ENCODE measurements at regions of chr11 and their contacts with region 1.

Region 1: GRCh38 chr11:77091146-77091940 is 11.3 kb upstream of the OMP start:
- DNase-seq: peak; percentile 61 to 85 (median 64)
- H3K4me3 ChIP-seq: no peak overlapping the region
- H3K4me3 Mint-ChIP-seq: no peak overlapping the region
- H3K27ac ChIP-seq: no peak overlapping the region
- H3K27ac Mint-ChIP-seq: no peak overlapping the region
- H3K4me1 ChIP-seq: no peaks in the 10 kb centered on the region
- H3K4me1 Mint-ChIP-seq: peaks cover 0 to 4% (median 4%) of the 10 kb centered on the region in 3 donors
- H3K27me3 ChIP-seq: no peaks in the 10 kb centered on the region
- H3K27me3 Mint-ChIP-seq: no peaks in the 10 kb centered on the region

Region 2: DNA sequence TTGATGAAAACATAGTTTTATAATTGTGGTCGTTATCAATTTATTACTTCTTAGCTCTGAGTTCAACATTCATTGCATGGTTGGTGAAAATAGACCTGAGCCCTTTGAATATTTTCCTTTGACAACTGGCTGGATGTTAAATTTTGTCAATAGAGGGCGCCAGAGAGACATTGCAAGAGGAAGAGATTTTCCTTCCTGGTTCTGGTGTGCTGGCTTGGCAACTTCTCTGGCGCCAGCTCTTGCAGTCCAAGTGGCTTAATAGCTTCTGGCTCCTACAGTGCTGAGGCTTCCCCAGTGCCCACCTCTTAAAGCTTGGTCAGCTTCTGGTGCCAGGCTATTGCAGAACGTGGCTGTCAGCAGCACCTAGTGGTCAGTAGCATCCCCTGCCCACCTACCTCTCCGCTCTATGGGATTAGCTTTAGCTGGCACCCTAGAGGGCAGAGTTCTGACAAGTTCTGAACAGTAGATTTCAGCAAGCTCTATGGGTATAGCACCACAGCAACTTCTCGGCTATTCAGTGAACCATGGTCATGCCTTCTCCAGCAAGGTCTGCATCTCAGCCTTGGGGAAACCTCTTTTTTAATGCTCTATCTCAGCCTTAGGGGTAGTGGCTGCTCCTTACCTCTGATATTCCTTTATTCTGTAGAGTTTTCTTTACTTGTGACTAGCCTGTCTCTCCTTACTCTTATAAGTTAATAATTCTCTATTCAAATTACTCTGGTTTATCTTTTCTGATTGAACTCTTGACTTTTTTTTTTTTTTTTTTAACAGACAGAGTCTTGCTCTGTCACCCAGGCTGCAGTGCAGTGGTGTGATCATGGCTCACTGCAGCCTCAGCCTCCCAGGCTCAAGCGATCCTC is 171.2 kb before region 1 on chr11:
- CTCF ChIA-PET with region 1: interaction called, 18 read pairs
- POLR2A ChIA-PET with region 1: no interaction called
- DNase-seq: peak; percentile 29 to 65 (median 62)
- H3K4me3 ChIP-seq: peak overlapping the region; percentile 15
- H3K4me3 Mint-ChIP-seq: peak overlapping the region in 6 of 7 donors; percentile 67 to 79 (median 72)
- H3K27ac ChIP-seq: no peak overlapping the region
- H3K27ac Mint-ChIP-seq: peak overlapping the region in 2 of 8 donors; percentile 35 to 75
- H3K4me1 ChIP-seq: peaks cover 5% of the 10 kb centered on the region
- H3K4me1 Mint-ChIP-seq: peaks cover 6 to 15% (median 13%) of the 10 kb centered on the region in 3 donors
- H3K27me3 ChIP-seq: no peaks in the 10 kb centered on the region
- H3K27me3 Mint-ChIP-seq: no peaks in the 10 kb centered on the region

Region 3: DNA sequence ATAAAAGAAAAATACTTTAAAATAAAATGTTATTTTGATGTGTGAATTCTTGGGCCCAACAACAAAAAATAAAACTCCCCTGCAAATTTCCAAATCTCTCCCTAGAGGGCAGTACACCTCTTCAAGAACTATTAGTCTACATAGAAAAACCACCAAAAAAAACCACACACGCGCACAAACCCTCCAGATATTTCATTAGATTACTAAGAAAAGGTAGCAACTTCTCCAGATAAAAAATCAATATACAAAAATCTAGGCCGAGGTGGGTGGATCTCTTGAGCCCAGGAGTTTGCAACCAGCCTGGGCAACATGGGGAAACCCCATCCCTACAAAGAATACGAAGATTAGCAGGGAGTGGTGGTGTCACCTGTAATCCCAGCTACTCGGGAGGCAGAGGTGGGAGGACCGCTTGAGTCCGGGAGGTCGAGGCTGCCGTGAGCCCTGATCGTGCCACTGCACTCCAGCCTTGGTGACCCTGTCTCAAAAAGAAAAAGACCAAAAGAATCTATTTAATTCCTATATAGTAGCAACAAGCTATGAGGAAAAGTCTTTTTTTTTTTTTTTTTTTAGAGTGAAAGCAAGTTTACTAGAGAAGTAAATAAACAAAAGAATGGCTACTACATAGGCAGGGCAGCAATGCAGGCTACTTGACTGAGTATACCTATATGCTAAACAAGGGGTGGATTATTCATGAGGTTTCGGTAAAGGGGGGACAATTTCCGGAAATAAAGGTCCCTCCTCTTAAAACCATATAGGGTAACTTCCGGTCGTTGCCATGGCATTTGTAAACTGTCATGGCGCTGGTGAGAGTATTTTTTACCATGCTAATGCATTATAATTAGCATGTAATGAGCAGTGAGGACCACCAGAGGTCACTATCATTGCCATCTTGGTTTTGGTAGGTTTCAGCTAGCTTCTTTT is 44.1 kb before region 1 on chr11:
- CTCF ChIA-PET with region 1: interaction called, 75 read pairs
- POLR2A ChIA-PET with region 1: interaction called, 5 read pairs
- DNase-seq: peak; percentile 59 to 92 (median 89)
- H3K4me3 ChIP-seq: peak overlapping the region; percentile 58
- H3K4me3 Mint-ChIP-seq: peak overlapping the region; percentile 57 to 73 (median 69)
- H3K27ac ChIP-seq: peak overlapping the region; percentile 25
- H3K27ac Mint-ChIP-seq: peak overlapping the region; percentile 9 to 89 (median 70)
- H3K4me1 ChIP-seq: peaks cover 15% of the 10 kb centered on the region
- H3K4me1 Mint-ChIP-seq: peaks cover 8 to 12% (median 10%) of the 10 kb centered on the region in 3 donors
- H3K27me3 ChIP-seq: peaks cover 5% of the 10 kb centered on the region
- H3K27me3 Mint-ChIP-seq: peaks cover 23 to 24% of the 10 kb centered on the region in 2 donors

Region 4: DNA sequence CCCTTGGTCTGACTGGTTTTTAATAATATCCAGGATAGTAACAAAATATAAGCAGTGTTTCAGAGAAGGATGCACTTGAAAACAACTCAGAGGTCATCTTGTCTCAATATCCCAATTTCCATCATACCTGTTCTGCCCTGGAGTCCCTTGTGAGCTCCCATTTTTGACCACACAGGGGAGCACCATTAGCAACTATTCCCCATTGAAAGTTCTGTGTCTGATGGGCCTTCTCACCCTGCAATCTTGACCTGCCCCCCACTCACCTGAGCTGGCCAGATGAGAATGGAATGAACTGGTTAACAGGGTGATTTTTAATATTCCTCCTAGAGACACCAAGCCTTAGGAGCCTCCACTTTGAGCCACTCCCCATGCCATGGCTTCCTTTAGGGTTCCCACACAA is 28.4 kb before region 1 on chr11:
- CTCF ChIA-PET with region 1: interaction called, 19 read pairs
- POLR2A ChIA-PET with region 1: no interaction called
- DNase-seq: no peak
- H3K4me3 ChIP-seq: no peak overlapping the region
- H3K4me3 Mint-ChIP-seq: peak overlapping the region in 1 of 7 donors; percentile 55
- H3K27ac ChIP-seq: no peak overlapping the region
- H3K27ac Mint-ChIP-seq: peak overlapping the region in 2 of 8 donors; percentile 18 to 37
- H3K4me1 ChIP-seq: peaks cover 8% of the 10 kb centered on the region
- H3K4me1 Mint-ChIP-seq: peaks cover 4 to 15% (median 10%) of the 10 kb centered on the region in 3 donors
- H3K27me3 ChIP-seq: no peaks in the 10 kb centered on the region
- H3K27me3 Mint-ChIP-seq: peaks cover 0 to 11% of the 10 kb centered on the region in 2 donors

Region 5: GRCh38 chr11:77127232-77127911 is 36.0 kb after region 1 on chr11:
- CTCF ChIA-PET with region 1: interaction called, 14 read pairs
- POLR2A ChIA-PET with region 1: no interaction called
- DNase-seq: peak; percentile 45 to 63 (median 49)
- H3K4me3 ChIP-seq: peak overlapping the region; percentile 61
- H3K4me3 Mint-ChIP-seq: peak overlapping the region in 6 of 7 donors; percentile 41 to 86 (median 66)
- H3K27ac ChIP-seq: no peak overlapping the region
- H3K27ac Mint-ChIP-seq: peak overlapping the region in 1 of 8 donors; percentile 50
- H3K4me1 ChIP-seq: peaks cover 8% of the 10 kb centered on the region
- H3K4me1 Mint-ChIP-seq: peaks cover 3 to 8% (median 5%) of the 10 kb centered on the region in 3 donors
- H3K27me3 ChIP-seq: no peaks in the 10 kb centered on the region
- H3K27me3 Mint-ChIP-seq: no peaks in the 10 kb centered on the region

Measured in CD8-positive, alpha-beta memory T cell (primary cell).